MCF 10A (cell line): ENCODE measurements at regions of chr4 and their contacts with region 1.

Region 1: DNA sequence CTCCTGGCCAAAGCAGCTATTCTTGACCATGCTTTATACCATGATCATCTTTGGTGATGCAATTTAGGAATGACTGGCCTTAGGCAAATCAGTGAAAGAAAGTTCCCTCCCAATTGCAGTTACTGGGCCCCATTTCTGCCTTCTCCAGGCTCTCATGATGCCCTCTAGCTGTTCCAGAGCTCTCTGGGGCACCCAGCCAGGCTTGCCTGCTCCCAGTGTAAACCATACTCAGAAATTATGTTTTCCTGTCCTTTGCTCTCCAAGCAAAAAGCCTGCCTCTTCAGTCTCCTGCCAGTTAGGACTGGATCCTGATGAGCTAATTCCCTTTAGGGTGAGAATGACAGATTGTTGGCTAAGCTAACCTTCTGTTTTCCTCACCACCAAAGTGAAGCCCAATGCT is 85.3 kb upstream of the RBPJ start:
- DNase-seq: peak; percentile 92
- H3K4me3 Mint-ChIP-seq: no peak overlapping the region
- H3K27ac Mint-ChIP-seq: peak overlapping the region; percentile 61
- H3K4me1 Mint-ChIP-seq: peaks cover 15% of the 10 kb centered on the region
- H3K27me3 Mint-ChIP-seq: no peaks in the 10 kb centered on the region
- CTCF ChIP-seq: no peak

Region 2: DNA sequence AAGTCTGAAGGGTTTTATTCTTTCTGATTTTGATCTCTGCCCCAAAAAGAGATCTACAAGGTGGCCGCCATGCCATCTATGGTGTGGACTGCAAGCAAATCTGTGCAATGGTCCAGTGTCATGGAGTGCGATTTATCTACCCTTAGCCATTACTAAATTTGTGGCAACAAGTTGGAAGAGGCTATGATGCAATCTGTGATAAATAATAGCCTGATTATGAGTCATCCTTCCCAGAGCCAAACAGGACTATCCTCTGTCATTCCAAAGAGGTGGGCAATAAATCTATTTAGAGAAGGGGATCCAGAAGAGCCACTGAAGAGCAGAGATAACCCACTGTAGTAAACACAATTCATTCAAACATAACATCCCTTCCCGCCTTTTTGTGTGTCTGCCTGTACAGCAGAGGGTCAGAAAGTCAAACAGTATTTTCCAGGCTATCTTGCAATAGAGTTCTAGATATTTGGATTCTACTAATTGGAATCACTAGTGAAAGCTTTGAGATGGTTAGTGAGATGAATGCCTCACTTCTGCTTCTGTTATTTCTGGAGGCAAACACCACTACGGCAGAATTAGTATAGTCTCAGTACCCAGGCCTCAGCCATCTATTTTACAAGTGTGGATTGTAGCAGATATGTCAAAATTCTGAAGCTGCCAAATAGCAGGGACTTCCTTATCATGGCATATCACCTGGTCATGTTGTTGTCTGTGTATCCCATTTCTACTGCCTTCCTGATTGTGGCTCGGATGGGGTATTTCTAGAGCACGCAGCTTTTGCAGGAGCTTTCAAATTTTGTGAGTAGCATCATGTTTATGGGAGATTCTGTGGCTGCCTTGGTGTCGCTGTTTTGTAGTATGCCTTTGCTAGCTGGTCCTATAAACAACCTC is 129.4 kb before region 1 on chr4:
- CTCF ChIA-PET with region 1: no interaction called
- POLR2A ChIA-PET with region 1: no interaction called
- intact Hi-C with region 1: no loop called
- DNase-seq: peak; percentile 60
- H3K4me3 Mint-ChIP-seq: no peak overlapping the region
- H3K27ac Mint-ChIP-seq: no peak overlapping the region
- H3K4me1 Mint-ChIP-seq: peaks cover 18% of the 10 kb centered on the region
- H3K27me3 Mint-ChIP-seq: no peaks in the 10 kb centered on the region
- CTCF ChIP-seq: no peak

Region 3: GRCh38 chr4:26163425-26164362 is 71.8 kb before region 1 on chr4:
- CTCF ChIA-PET with region 1: interaction called, 10 read pairs
- POLR2A ChIA-PET with region 1: no interaction called
- intact Hi-C with region 1: no loop called
- DNase-seq: no peak
- H3K4me3 Mint-ChIP-seq: no peak overlapping the region
- H3K27ac Mint-ChIP-seq: no peak overlapping the region
- H3K4me1 Mint-ChIP-seq: no peaks in the 10 kb centered on the region
- H3K27me3 Mint-ChIP-seq: no peaks in the 10 kb centered on the region
- CTCF ChIP-seq: no peak

Region 4: DNA sequence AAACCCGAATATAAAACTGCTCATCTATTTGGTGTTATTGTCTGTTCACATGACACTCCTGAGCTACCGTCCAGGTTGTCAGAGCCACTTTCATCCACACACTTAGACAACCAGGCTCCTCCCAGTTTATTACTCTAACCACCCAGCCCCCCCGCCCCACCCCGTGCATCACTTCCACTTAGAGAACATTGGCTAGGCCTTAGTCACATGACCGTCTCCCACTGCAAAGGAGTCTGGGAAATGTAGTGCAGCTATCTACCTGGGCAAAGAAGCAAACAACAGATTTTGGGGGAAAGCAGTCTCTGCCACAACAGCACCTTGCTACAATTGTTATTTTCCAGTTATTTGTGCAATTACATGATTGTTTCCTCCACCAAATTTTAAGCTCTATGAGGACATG is 27.7 kb after region 1 on chr4:
- CTCF ChIA-PET with region 1: no interaction called
- POLR2A ChIA-PET with region 1: no interaction called
- intact Hi-C with region 1: no loop called
- DNase-seq: peak; percentile 33
- H3K4me3 Mint-ChIP-seq: no peak overlapping the region
- H3K27ac Mint-ChIP-seq: no peak overlapping the region
- H3K4me1 Mint-ChIP-seq: no peaks in the 10 kb centered on the region
- H3K27me3 Mint-ChIP-seq: no peaks in the 10 kb centered on the region
- CTCF ChIP-seq: no peak

Region 5: GRCh38 chr4:26319467-26319948 is 84.0 kb after region 1 on chr4:
- CTCF ChIA-PET with region 1: interaction called, 4 read pairs
- POLR2A ChIA-PET with region 1: interaction called, 48 read pairs
- intact Hi-C with region 1: loop called (anchors 1 kb)
- DNase-seq: peak; percentile 100
- H3K4me3 Mint-ChIP-seq: peak overlapping the region; percentile 87
- H3K27ac Mint-ChIP-seq: peak overlapping the region; percentile 94
- H3K4me1 Mint-ChIP-seq: peaks cover 16% of the 10 kb centered on the region
- H3K27me3 Mint-ChIP-seq: no peaks in the 10 kb centered on the region
- CTCF ChIP-seq: no peak